ENCODE measurements at regions of chr9 and their contacts with region 1.

Region 1: DNA sequence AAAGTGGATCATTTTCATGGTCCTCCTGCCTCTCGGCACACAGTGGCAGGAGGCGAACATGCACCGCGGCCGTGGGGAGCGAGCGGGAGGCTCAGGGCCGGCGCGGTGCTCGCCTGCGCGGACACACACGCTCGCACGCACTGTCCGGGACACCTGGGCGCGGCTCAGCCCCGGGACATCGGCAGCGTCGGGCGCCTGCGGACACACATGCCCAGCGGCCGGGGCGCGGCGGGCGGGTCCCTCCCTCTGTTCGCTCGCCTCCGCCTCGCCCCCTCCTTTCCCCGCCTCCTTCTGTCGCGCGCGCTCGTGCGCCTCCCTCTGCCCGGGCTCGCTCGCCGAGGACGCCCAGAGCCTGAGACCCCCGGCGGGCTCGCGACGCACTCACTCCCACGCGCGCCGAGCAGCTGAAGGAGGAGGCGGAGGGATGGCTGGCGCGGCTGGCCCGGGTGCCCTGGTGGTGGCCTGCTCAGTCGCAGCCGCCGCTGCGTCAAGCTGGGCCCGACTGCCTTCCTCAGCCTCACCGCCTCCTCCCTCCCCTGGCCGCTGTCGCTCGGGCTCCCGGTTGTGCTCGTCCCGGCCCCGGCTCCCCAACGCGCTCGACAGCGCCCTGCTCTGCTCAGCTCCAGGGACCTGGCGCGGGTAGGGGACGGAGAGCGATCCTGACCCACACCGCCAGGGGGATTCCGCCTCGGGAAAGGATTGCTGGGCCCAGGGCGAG is at the start of gene FRMD3:
- DNase-seq: peak; percentile 24 to 67 (median 56)
- H3K4me3 ChIP-seq: peak within 1 kb of the TSS; percentile 47
- H3K27ac ChIP-seq: no peak within 1 kb of the TSS
- H3K4me1 ChIP-seq: peaks cover 2% of the 10 kb centered on the region
- H3K27me3 ChIP-seq: no peaks in the 10 kb centered on the region
- CTCF ChIP-seq: peak in 2 of 3 donors; percentile 40 to 62
- EP300 ChIP-seq: no peak
- POLR2A ChIP-seq: no peak
- total RNA-seq, gene FRMD3: 0.83 to 9.1 (median 4.7) TPM

Region 2: DNA sequence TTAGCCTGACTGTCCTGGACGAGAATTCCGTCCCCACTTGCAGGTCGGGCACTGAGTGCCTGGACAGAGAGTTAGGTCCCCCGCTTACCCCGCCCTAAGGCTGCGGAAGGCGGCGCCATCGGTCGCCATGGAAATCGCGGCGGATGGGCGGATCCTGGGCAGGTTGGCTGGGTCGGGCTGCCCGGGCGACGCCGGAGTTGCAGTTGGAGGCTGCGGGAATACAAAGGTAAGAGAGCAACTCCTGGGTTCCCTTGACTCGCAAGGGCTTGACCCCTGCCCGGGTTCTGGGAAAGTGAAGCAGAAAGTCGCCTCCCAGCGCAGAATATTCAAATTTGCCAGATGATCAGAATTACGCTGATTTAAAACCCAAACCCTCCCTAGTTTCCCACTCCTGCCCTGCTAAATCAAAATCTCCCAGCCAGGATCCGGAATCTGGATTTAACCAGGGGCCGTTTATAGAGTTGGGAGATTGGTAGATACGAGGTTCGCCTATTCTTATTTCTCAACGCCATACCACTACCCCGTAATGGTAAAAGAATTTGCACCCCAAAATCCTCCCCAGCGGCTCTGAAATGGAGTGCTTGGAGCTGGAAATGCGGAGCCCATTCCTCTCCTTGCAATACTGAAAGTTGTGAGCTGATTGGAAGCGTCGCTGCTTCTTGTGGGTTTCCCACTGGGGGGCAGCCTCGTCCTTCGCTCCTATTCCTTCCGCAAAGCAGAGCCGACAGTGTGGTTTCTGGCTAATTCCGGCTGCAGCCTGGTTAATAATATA is 319.0 kb before region 1 on chr9:
- intact Hi-C with region 1: loop called in 1 of 4 experiments (anchors 10 kb)
- DNase-seq: peak; percentile 71 to 87 (median 75)
- H3K4me3 ChIP-seq: peak overlapping the region; percentile 46
- H3K27ac ChIP-seq: peak overlapping the region in 1 of 2 donors; percentile 52
- H3K4me1 ChIP-seq: no peaks in the 10 kb centered on the region
- H3K27me3 ChIP-seq: no peaks in the 10 kb centered on the region
- CTCF ChIP-seq: no peak
- EP300 ChIP-seq: no peak
- POLR2A ChIP-seq: no peak

Measured in ovary (tissue), 10 donors.